ENCODE measurements at regions of chr1 and their contacts with region 1.

Region 1: DNA sequence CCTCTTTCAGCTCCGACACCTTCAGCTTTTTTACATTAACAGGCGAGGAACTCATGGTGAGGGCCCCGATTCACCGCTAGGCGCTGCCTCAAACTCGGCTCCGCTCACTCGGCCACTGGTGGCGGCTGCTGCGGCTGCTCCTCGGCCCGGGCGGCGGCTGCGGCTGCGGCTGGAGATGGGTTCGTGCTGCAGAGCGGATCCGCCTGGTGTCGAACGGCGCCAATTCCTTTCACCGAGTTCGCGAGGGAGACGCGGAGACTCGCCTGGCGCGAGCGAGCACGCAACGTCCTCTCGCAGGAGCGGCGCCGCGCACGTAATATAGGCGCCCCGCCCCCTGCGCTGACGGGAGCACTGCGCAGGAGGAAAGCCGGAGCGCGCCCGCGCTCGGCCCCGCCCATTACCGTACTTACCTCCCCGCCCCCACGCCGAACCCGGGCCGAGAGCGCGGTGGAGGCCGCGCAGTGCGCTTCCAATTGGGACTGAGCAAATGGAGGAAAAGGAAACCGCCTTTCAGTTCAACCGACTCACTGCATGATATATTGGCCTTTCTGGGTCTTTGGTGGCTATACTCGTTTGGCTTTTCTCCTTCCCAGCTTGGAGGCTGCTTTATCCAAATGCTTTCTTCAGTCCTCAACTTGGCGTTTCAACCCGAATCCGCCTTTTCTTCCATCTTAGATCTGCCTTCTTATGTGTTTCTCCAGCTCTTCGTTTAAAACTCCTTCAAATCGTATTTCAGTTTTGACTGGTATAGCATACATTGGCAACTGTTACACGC is at the start of gene HNRNPU:
- DNase-seq: peak; percentile 96 to 97
- ATAC-seq: peak; percentile 91 to 96 (median 94)
- H3K4me3 ChIP-seq: peak within 1 kb of the TSS; percentile 87 to 100 (median 93)
- H3K27ac ChIP-seq: peak within 1 kb of the TSS; percentile 99 to 100 (median 100)
- H3K4me1 ChIP-seq: peaks cover 15 to 50% (median 41%) of the 10 kb centered on the region in 9 donors
- H3K27me3 ChIP-seq: no peaks in the 10 kb centered on the region
- CTCF ChIP-seq: peak in 8 of 9 donors; percentile 7 to 53 (median 24)
- total RNA-seq, gene HNRNPU: 158 to 200 (median 175) TPM

Region 2: DNA sequence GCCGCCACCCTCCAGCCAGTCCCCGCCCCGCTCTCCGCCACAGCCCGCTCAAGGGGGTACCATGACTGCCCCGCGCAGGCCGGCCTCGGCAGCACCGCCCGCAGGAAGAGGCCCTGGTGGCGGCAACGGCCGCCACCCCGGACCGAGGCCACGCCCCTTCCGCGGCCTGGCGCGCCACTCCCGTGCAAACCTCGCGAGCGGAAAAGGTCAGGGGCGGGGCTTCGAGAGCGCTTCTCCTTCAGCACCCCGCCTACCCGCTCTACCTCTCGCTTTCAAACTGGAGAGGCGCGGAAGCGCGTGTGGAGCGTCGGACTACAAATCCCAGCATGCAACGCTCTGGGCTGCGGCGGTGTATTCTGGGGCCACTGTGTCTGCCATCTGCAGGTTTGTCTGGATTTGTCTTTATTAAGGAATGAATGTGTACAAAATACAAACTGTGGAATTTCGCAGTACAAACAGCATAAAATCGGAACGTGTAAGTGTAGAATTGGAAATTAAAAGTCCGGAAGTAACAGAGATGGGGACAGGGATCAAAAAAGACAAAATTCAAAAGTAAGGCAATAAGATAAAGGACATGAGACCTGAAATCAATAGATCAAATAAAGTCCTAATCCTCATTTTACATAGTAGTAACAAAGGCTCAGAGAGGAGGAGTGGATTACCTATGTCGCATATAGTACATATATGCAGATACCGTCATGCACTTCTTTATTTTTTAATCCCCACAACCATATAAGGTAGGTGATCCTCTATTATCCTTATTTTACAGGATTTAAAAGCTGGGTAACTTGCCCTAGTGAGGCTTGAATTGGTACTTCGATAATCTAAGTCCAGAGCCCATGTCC is 412.3 kb before region 1 on chr1:
- intact Hi-C with region 1: loop called in 1 of 10 experiments (anchors 5 kb)
- DNase-seq: peak; percentile 99
- ATAC-seq: peak; percentile 97 to 100 (median 98)
- H3K4me3 ChIP-seq: peak overlapping the region in 9 of 10 donors; percentile 75 to 97 (median 85)
- H3K27ac ChIP-seq: peak overlapping the region in 9 of 10 donors; percentile 90 to 97 (median 95)
- H3K4me1 ChIP-seq: peaks cover 4 to 35% (median 16%) of the 10 kb centered on the region in 9 donors
- H3K27me3 ChIP-seq: no peaks in the 10 kb centered on the region
- CTCF ChIP-seq: peak; percentile 26 to 71 (median 50)

Region 3: GRCh38 chr1:244652699-244653466 is 211.6 kb before region 1 on chr1 and contains the start of gene DESI2:
- intact Hi-C with region 1: loop called in 1 of 10 experiments (anchors 10 kb)
- DNase-seq: peak; percentile 97 to 99
- ATAC-seq: peak; percentile 96 to 99 (median 98)
- H3K4me3 ChIP-seq: peak within 1 kb of the TSS; percentile 71 to 97 (median 85)
- H3K27ac ChIP-seq: peak within 1 kb of the TSS; percentile 85 to 99 (median 96)
- H3K4me1 ChIP-seq: peaks cover 11 to 49% (median 40%) of the 10 kb centered on the region in 9 donors
- H3K27me3 ChIP-seq: no peaks in the 10 kb centered on the region
- CTCF ChIP-seq: peak; percentile 30 to 80 (median 55)
- total RNA-seq, gene DESI2: 16.4 to 24.0 (median 21.0) TPM

Region 4: DNA sequence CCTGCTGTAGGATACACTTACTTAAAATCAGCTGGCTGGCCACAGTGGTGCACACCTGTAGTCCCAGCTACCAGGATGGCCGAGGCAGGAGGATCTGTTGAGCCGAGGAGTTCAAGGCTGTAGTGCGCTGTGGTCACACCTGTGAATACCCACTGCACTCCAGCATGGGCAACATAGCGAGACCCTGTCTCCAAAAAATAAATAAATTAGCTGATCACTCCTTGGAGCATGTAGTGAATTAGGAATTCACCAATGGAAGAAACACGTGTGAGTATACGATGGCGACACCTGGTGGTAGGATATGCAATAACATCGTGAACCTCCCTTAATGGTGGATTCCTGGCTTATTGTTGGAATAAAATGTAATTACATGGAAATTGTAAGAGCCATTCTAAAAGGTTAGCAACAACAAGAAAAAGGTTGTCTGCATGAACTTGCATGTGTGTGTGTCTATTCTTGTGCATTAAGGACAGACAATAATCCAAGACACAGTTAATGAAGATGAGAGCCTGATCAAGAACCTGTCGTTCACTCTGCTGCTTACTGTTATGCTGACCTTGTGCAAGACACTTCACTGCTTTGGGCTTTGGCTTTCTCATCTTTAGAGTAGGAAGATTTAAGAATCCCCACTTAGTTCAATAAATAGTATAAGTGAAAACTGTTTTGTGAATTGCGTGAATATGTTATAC is 67.6 kb before region 1 on chr1:
- intact Hi-C with region 1: no loop called
- DNase-seq: peak in 1 of 2 donors; percentile 48
- ATAC-seq: peak in 6 of 8 donors; percentile 64 to 72 (median 68)
- H3K4me3 ChIP-seq: no peak overlapping the region
- H3K27ac ChIP-seq: no peak overlapping the region
- H3K4me1 ChIP-seq: peaks cover 0 to 6% (median 0%) of the 10 kb centered on the region in 9 donors
- H3K27me3 ChIP-seq: no peaks in the 10 kb centered on the region
- CTCF ChIP-seq: peak; percentile 80 to 93 (median 87)

Region 5: DNA sequence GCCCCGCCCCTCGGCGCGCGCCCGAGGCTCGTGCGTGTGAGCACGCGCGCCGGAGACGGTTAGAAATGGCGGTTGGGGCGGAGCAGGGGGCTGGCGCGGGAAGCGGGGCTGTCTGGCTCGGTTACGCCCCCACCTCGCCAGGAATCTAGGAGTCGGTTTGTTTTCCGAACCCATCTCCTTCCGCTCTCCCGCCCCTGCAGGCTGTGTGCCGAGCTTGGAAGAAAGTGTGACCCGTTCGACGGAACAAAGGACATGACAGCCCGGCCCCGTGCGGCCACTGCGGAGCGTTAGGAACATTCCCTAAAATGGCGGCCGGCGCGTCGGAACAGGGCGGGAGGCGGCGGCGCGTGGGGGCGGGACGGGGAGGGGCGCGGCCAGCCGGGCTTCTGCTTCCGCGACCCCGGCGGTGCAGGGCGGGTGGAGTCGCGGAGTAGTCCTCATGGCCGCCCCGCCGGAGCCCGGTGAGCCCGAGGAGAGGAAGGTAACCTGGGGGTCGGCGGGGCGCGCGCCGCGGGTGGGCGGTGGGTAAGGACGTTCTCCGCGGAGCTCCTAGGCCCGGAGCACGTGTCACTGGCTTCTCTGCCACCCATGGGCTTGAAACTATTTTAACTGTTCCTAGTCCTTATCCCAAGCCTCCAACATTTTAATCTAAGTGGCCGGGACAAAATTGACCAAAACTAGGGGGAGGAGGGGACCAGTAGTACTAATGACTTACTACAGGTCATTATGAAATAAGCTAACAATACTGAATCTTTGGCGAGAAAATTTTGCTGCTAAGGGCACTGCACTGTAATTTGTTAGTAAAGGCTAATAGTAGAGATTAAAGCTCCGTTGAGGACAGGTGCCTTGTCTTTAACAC is 28.9 kb before region 1 on chr1 and contains the start of gene COX20:
- intact Hi-C with region 1: loop called in 7 of 10 experiments (anchors 1 to 2 kb)
- DNase-seq: peak; percentile 89 to 92
- ATAC-seq: peak; percentile 83 to 95 (median 91)
- H3K4me3 ChIP-seq: peak within 1 kb of the TSS; percentile 49 to 90 (median 76)
- H3K27ac ChIP-seq: peak within 1 kb of the TSS; percentile 96 to 100 (median 99)
- H3K4me1 ChIP-seq: peaks cover 0 to 51% (median 45%) of the 10 kb centered on the region in 9 donors
- H3K27me3 ChIP-seq: no peaks in the 10 kb centered on the region
- CTCF ChIP-seq: peak in 3 of 9 donors; percentile 6 to 21 (median 8)
- total RNA-seq, gene COX20: 56.6 to 94.1 (median 64.4) TPM

Region 6: GRCh38 chr1:244952940-244953339 is 88.5 kb after region 1 on chr1:
- intact Hi-C with region 1: no loop called
- DNase-seq: no peak
- ATAC-seq: no peak
- H3K4me3 ChIP-seq: no peak overlapping the region
- H3K27ac ChIP-seq: peak overlapping the region in 4 of 10 donors; percentile 36 to 77 (median 74)
- H3K4me1 ChIP-seq: peaks cover 0 to 20% (median 6%) of the 10 kb centered on the region in 9 donors
- H3K27me3 ChIP-seq: no peaks in the 10 kb centered on the region
- CTCF ChIP-seq: no peak

Region 7: GRCh38 chr1:244970661-244971551 is 106.5 kb after region 1 on chr1:
- intact Hi-C with region 1: loop called (anchors 1 to 10 kb)
- DNase-seq: peak; percentile 95
- ATAC-seq: peak; percentile 88 to 95 (median 89)
- H3K4me3 ChIP-seq: peak overlapping the region; percentile 44 to 80 (median 71)
- H3K27ac ChIP-seq: peak overlapping the region; percentile 97 to 100 (median 100)
- H3K4me1 ChIP-seq: peaks cover 0 to 26% (median 19%) of the 10 kb centered on the region in 9 donors
- H3K27me3 ChIP-seq: no peaks in the 10 kb centered on the region
- CTCF ChIP-seq: peak; percentile 37 to 86 (median 66)

Region 8: DNA sequence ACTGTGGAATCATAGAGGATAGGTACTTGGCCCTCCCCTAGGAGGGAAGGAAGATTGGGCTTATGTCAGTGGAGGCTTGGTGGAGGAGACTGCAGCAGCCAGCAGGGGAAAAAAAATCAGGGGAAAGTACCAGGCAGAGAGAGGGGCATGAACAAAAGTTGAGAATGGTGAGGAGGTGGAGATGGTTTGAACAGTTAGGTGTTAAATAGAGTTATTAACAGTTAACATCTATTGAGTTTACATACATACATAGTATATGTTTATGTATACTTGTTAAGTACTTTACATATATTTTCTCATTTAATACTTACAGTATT is 136.4 kb after region 1 on chr1:
- intact Hi-C with region 1: no loop called
- DNase-seq: no peak
- ATAC-seq: no peak
- H3K4me3 ChIP-seq: no peak overlapping the region
- H3K27ac ChIP-seq: no peak overlapping the region
- H3K4me1 ChIP-seq: no peaks in the 10 kb centered on the region
- H3K27me3 ChIP-seq: no peaks in the 10 kb centered on the region
- CTCF ChIP-seq: no peak

Region 9: DNA sequence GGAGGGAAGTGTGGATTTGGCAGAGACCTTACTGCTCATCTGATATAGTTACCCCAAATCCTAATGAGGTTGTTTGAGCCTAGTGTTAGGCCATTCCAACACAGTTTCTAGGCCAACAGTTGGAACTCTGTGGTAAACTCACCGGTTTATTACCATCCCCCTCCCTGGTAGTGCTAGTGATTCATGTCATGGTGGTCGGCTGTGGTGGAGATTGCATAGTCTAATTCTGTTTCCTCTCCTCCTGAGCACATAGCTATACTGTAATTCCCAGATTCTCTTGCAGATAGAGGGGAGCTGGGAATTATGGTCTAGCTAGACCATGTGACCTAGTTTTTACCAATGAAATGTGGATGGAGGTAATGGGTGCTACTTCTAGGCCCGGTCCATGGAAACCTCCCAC is 166.6 kb after region 1 on chr1:
- intact Hi-C with region 1: loop called in 1 of 10 experiments (anchors 10 kb)
- DNase-seq: no peak
- ATAC-seq: no peak
- H3K4me3 ChIP-seq: no peak overlapping the region
- H3K27ac ChIP-seq: no peak overlapping the region
- H3K4me1 ChIP-seq: no peaks in the 10 kb centered on the region
- H3K27me3 ChIP-seq: no peaks in the 10 kb centered on the region
- CTCF ChIP-seq: no peak

Region 10: DNA sequence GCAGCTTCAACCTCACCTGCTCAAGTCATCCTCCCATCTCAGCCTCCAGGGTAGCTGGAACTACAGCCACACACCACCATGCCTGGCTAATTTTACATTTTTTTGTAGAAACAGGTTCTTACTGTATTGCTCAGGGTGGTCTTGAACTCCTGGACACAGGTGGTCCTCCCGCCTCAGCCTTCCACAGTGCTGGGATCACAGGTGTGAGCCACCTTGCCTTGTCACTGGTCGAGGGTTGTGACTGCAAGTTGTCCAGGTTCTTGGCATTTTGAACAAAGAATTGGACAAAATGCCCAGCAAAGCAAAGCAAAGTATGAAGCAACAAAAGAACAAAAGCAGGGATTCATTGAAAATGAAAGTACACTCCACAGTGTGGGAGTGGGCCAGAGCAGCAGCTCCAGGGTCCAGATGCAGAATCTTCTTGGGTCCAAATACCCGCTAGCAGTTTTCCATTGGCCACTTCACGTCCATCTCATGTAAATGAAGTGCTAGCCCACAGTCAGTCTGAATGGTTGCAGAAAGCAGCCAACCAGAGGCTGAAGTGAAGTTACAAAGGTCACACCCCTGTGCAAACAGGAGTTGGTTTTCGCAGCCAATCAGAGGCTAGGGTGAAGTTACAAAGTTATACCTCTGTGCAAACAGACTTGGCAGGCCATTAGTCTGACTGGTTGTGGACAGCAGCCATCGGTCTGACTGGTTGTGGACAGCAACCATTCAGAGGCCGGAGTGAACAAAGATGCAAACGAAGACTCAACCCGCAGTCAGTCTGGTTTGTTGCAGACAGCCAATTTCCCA is 180.8 kb after region 1 on chr1:
- intact Hi-C with region 1: loop called in 7 of 10 experiments (anchors 1 to 10 kb)
- DNase-seq: peak in 1 of 2 donors; percentile 74
- ATAC-seq: peak; percentile 34 to 84 (median 62)
- H3K4me3 ChIP-seq: peak overlapping the region in 2 of 10 donors; percentile 1 to 8
- H3K27ac ChIP-seq: peak overlapping the region in 6 of 10 donors; percentile 2 to 56 (median 34)
- H3K4me1 ChIP-seq: peaks cover 0 to 43% (median 13%) of the 10 kb centered on the region in 9 donors
- H3K27me3 ChIP-seq: no peaks in the 10 kb centered on the region
- CTCF ChIP-seq: no peak